CD4-positive, alpha-beta memory T cell (primary cell): ENCODE measurements at regions of chr17 and their contacts with region 1.

Region 1: DNA sequence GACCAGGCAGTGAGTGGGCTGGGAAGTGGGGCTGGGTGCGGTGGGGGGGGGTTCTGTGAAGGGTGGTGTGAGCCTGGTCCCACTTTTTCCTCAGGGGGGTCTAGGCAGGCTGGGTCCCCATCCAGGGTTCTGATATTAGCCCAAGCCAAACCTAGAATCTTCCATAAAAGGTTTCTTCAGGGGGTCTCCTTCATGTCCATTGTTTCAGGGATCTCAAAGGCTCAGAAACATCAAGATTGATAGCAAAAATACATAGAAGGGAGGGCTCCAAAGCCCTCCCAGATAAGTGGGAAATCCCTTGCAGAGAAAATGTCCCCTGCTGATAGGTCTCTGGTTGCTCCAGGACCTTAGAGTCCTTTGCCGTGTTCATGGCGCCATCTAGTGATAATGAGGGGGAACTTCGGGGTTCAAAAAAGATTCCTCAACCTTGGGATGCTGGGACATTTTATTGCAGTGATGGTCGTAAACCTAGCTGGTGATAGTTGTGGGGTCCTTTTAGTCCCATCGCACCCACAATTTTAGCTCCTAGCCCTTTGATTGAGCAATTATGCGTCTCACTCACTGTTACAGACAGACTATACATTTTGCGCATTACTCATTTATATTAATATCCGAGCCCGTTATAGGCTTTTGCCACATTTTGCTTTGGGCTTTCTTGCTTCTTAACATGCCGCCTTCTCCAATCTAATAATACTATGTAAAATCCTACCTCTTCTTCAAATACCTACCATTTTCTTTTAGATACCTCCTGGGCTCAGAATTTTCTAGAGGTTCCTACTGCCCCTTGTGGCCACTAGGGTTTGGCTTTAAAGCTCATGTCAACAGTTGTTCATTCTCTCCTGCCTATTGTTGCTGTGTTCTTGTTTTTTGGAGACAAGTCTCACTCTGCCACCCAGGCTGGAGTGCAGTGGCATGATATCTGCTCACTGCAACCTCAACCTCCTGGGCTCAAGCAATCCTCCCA is 35.1 kb downstream of the IGF2BP1 start:
- DNase-seq: peak; percentile 41 to 56 (median 54)
- H3K4me3 ChIP-seq: no peak overlapping the region
- H3K4me3 Mint-ChIP-seq: no peak overlapping the region
- H3K27ac ChIP-seq: no peak overlapping the region
- H3K27ac Mint-ChIP-seq: no peak overlapping the region
- H3K4me1 ChIP-seq: peaks cover 3% of the 10 kb centered on the region
- H3K4me1 Mint-ChIP-seq: peaks cover 0 to 7% (median 2%) of the 10 kb centered on the region in 4 donors
- H3K27me3 ChIP-seq: no peaks in the 10 kb centered on the region
- H3K27me3 Mint-ChIP-seq: peaks cover 11 to 12% of the 10 kb centered on the region in 2 donors

Region 2: DNA sequence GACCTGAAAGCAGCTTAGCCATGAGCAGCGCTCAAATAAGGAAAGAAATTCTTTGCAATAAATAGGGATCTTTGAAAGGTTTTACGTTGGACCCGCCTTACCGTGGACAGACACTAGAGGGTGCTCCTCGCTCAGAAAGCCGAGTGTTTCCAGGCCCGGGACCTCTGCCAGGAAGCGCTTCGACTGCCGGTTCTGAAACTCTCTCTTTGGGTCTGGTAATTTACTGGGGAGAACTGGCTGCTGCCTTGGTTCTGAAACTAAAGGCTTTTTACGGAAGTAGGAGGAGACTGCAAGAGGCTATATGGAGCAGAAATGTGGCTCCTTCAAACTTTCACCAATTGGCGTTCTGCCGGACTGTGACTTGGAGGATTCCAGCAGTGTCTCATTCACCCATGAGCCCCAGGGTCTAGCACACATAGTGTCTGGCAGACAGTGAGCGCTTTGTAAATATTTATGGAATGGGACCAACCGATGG is 360.5 kb before region 1 on chr17:
- CTCF ChIA-PET with region 1: interaction called, 3 read pairs
- POLR2A ChIA-PET with region 1: no interaction called
- intact Hi-C with region 1: loop called (anchors 1 kb)
- DNase-seq: peak; percentile 56 to 66 (median 60)
- H3K4me3 ChIP-seq: no peak overlapping the region
- H3K4me3 Mint-ChIP-seq: peak overlapping the region in 7 of 8 donors; percentile 17 to 78 (median 39)
- H3K27ac ChIP-seq: no peak overlapping the region
- H3K27ac Mint-ChIP-seq: no peak overlapping the region
- H3K4me1 ChIP-seq: no peaks in the 10 kb centered on the region
- H3K4me1 Mint-ChIP-seq: peaks cover 0 to 6% (median 3%) of the 10 kb centered on the region in 4 donors
- H3K27me3 ChIP-seq: no peaks in the 10 kb centered on the region
- H3K27me3 Mint-ChIP-seq: peaks cover 23 to 33% of the 10 kb centered on the region in 2 donors

Region 3: DNA sequence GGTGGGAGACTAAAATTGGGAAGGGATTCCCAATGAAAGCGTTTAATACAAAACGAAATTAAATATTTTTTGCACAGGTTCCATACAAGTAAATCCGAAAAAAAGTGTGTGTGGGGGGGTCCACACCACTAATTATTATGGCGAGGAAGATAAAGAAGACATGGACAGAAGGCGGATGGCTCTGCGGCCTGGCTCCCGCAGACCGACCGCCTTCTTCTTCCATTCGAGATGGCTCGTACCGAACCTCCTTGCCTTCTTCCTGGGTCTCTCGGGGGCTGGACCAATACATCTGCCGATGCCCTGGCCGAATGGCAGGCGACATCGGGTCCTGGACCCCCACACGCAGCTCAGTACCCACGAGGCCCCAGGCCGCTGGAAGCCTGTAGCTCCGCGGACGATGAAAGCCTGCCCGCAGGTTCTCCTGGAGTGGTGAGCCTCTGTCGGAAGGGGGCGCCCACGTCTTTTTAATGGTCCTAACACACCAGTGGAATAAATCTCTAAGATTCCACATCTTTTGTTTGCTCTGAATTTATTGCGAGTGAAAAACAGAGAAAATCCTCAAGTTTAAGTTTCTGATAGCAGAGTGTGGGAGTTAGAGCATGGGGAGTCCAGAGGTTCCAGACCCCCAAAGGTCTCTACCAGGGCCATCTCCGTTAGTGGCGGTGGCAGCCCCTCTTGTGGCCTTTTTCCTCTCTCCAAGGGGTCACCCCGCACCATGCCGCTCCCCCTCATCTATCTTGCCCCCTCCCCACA is 307.8 kb before region 1 on chr17:
- CTCF ChIA-PET with region 1: no interaction called
- POLR2A ChIA-PET with region 1: no interaction called
- intact Hi-C with region 1: loop called (anchors 1 kb)
- DNase-seq: peak; percentile 64 to 79 (median 66)
- H3K4me3 ChIP-seq: no peak overlapping the region
- H3K4me3 Mint-ChIP-seq: peak overlapping the region; percentile 59 to 84 (median 78)
- H3K27ac ChIP-seq: no peak overlapping the region
- H3K27ac Mint-ChIP-seq: peak overlapping the region in 3 of 7 donors; percentile 82 to 86 (median 85)
- H3K4me1 ChIP-seq: peaks cover 40% of the 10 kb centered on the region
- H3K4me1 Mint-ChIP-seq: peaks cover 22 to 81% (median 33%) of the 10 kb centered on the region in 4 donors
- H3K27me3 ChIP-seq: peaks cover 96% of the 10 kb centered on the region
- H3K27me3 Mint-ChIP-seq: peaks cover 79 to 83% of the 10 kb centered on the region in 2 donors

Region 4: GRCh38 chr17:48816774-48817590 is 215.3 kb before region 1 on chr17 and contains the start of gene TTLL6:
- CTCF ChIA-PET with region 1: interaction called, 3 read pairs
- POLR2A ChIA-PET with region 1: no interaction called
- intact Hi-C with region 1: loop called (anchors 2 kb)
- DNase-seq: peak; percentile 78 to 93 (median 81)
- H3K4me3 ChIP-seq: peak within 1 kb of the TSS; percentile 19 to 26
- H3K4me3 Mint-ChIP-seq: peak within 1 kb of the TSS; percentile 75 to 96 (median 88)
- H3K27ac ChIP-seq: no peak within 1 kb of the TSS
- H3K27ac Mint-ChIP-seq: peak within 1 kb of the TSS; percentile 14 to 79 (median 47)
- H3K4me1 ChIP-seq: peaks cover 20% of the 10 kb centered on the region
- H3K4me1 Mint-ChIP-seq: peaks cover 8 to 24% (median 18%) of the 10 kb centered on the region in 4 donors
- H3K27me3 ChIP-seq: peaks cover 4% of the 10 kb centered on the region
- H3K27me3 Mint-ChIP-seq: peaks cover 14 to 20% of the 10 kb centered on the region in 2 donors
- total RNA-seq, gene TTLL6: not detected